H1 (cell line): ENCODE measurements at regions of chr1 and their contacts with region 1.

Region 1: GRCh38 chr1:193358419-193358818 is 172.0 kb upstream of the B3GALT2 start:
- DNase-seq: peak in 1 of 2 experiments; percentile 0
- H3K4me3 ChIP-seq: no peak overlapping the region
- H3K27ac ChIP-seq: no peak overlapping the region
- H3K4me1 ChIP-seq: no peaks in the 10 kb centered on the region
- H3K27me3 ChIP-seq: no peaks in the 10 kb centered on the region
- CTCF ChIP-seq: peak in 2 of 3 experiments; percentile 22 to 49; a peak in 3 of 4 replicates
- EP300 ChIP-seq: no peak
- POLR2A ChIP-seq: no peak
- RAD21 ChIP-seq: peak; percentile 41 to 54

Region 2: DNA sequence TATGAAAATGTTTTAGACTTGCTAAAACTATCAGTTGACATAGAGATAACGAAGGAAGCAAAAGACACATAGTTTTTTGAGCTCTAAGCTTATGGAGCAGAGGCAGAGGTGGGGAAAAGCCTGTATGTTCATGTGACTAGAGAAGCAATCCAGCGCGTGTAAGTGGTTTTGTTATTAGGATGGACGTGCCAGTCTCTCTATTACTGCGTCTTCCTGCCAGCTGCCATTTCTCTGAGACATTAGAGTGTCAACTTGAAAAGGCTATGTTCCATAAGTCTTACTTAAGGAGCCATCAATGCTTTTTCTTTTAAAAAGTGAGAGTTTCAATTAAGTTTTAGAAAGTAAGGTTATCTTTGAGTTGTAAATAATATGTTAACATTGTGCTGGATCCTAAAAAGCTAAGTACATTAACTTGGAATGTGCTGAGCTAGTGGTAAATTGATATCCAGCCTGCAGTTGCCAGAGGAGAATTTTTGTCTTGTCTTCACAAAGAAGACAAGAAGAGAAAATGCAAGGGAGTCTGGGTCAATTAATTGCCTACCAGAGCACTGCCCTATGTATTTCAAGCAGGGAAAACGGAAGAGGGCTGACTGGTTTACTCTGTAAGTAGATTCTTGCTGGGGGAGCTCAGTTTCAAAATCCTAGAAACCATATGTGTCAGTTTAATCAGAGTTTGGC is 10.2 kb before region 1 on chr1:
- CTCF ChIA-PET with region 1: interaction called, 11 read pairs
- POLR2A ChIA-PET with region 1: interaction called, 3 read pairs
- DNase-seq: no peak
- H3K4me3 ChIP-seq: no peak overlapping the region
- H3K27ac ChIP-seq: no peak overlapping the region
- H3K4me1 ChIP-seq: no peaks in the 10 kb centered on the region
- H3K27me3 ChIP-seq: no peaks in the 10 kb centered on the region
- CTCF ChIP-seq: no peak
- EP300 ChIP-seq: no peak
- POLR2A ChIP-seq: no peak
- RAD21 ChIP-seq: no peak